GM18951 (cell line): ENCODE measurements at regions of chr4 and their contacts with region 1.

Region 1: DNA sequence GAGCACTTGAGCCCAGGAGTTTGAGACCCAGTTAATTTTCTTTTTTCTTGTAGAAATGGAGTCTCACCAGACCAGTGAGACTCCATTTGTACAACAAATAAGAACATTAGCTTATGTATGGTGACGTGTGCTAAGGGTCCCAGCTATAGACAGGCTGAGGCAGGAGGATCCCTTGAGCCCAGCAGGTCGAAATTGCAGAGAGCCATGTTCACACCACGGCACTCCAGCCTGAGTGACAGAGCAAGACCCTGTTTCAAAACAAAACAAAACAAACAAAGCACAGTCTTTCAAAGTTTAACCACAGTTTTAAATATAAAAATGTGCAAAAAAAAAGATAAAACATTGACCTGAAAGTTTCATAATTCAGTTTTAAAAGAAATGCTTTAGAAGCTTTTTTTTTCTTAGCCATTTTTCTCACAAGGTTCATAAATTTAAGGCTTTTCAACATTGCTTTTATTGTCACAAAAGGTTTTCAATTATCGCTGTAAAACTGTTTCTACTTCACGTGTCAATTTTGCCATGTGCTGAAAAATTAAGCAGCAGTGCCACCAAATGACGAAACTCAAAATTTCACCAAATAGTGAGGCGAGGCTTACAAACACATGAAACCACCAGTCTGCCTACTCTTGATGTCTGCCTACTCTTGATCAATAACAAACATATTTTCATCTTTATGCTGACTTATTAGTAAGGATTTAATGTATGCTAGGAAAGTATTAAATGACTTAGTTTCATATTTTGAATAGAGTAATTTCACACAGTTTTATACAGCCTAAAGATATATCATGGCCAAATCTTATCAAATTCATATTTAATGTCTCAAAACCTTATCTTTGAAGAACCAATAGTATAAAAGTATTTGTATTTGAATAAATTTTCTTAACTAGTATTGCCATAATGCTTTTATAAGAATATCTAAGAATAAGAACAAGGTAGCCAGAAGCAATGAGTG is 126.3 kb downstream of the NEK1 start:
- POLR2A ChIP-seq: no peak

Region 2: DNA sequence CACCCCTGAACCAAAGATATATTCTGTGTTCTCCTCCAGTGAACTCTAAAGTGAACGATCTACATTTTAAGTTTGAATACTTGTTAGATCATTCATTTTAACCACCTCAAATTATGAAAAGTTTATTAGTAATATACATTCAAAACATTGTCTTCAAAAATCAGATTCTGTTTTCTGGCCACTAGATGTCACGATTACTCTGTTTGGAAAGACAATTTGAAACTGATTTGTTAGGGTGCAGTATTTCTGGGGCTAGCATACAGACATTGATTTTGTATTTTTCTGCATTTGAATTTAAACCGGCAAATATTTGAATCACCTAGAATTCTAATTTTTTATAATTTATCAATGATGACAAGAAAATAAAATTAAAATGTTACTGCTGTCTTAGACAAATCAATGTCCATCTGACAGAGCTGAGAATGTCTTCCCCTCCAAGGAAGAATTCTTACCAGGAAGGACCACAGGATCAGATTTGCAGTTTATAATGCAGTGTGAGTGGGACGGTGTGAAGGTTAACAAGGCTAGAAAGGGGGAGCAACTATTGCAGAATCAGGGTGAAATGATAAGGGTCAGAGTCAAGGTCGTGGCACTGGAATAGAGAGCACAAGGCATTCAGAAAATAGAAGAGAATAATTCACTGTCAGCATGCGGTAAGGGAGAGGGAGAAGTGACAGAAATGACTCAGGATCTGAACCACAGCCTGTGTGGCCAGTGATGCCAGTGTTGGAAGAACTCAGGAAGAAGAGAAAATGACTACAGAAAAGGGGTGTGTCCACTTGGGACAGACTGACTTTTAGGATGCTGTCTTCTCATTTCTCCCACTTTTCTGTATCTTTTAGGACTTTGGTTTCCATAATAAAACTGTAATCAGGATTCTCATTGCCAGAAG is 1302.1 kb before region 1 on chr4:
- in situ Hi-C with region 1: loop called (anchors 25 kb)
- POLR2A ChIP-seq: no peak

Region 3: DNA sequence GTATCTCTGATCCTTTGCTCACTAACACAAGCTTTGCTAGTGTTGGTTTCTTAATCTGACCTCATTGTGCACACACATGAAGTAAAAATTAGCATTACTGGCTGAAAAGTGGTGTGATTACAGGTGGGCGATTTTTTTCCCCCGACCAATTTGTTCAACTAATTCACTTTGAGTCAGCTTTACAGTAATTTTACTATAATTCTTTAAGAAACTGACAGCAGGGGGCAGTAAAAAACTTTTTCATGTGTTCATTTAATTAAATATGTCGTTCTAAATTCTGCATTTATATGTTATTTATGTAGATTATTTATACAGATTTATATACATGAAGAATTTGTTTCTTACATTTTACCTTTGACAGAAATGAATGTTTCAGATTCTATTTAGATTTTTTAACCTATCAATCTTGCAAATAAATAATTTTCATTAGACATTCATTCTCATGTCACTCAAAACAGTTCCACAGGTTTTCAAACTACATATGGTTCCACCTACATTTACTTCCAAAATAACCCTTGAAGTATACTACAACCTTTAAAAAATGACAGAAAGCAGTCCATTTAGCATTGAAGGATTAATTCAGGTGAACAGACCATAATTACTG is 971.7 kb before region 1 on chr4:
- in situ Hi-C with region 1: loop called (anchors 25 kb)
- POLR2A ChIP-seq: no peak

Region 4: DNA sequence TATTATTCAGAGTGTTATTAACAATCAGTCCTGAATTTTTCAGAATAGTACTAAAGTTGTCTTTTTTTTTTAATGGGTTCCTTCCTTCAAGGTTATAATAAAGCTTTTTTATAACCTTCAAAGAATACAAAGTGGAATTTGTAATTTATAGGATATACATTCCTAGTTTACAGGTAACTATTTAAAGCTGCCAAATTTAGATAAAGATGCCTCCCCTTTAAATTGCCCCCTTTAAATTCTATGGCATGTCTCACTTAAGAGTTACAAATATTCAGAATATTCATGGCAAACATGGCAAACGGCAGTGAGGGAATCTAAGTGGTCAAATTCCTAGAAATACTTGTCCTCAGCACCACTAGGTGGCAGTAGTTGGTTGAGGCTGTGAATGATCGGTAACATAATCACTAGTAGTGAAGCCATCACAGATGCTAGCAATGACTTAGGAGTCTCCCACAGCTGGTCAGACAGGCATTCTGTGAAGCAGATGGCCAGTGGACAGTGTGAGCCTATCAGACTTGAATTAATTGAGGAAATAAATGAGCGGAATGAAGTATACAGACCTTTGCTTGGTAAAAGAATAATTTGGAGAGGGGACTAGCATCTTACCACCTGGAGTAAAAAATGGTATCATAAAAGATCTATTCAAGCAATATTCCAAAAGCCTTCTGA is 562.4 kb before region 1 on chr4:
- in situ Hi-C with region 1: loop called (anchors 10 kb)
- POLR2A ChIP-seq: no peak

Region 5: GRCh38 chr4:169010125-169011023 is 475.7 kb before region 1 on chr4 and contains the start of gene CBR4:
- in situ Hi-C with region 1: loop called (anchors 10 kb)
- POLR2A ChIP-seq: peak; percentile 90

Region 6: GRCh38 chr4:169327951-169328350 is 158.1 kb before region 1 on chr4:
- in situ Hi-C with region 1: no loop called
- POLR2A ChIP-seq: no peak